WTC11 (cell line): ENCODE measurements at regions of chr2 and their contacts with region 1.

Region 1: DNA sequence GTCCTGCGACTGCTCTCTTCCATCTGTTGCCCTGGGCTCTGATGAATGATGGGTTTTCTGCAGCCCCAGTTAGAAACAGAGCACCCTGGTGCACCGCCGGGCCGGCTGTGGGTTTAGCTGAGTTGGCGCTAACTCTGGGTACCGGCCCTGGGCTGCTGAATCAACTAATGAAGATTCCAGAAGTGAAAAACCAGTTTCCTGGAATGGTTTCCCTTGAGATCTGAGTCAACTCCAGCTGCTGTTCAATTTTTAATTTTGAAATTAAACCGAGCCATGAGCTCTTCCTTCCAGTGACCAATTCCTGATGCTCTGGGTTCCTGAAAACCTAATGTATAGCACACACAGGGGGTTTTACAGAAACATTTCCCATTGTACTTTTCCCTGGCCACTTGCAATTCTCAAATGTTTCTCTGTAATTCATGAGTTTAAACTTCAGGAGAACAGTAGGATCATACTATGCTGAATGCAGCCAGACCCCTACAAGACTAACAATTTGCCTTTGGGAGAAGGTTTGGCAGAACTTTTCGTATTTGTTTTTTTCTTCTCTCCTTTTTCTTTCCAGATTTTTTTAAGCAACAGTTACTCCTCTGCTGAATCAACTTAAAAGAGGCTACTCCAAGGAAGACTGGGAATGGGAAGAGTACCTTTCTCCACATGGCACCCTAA is 5.5 kb downstream of the COL6A3 start:
- DNase-seq: no peak
- ATAC-seq: no peak
- H3K4me3 Mint-ChIP-seq: no peak overlapping the region
- H3K27ac Mint-ChIP-seq: no peak overlapping the region; the same call in 1 of the 2 replicates
- H3K4me1 Mint-ChIP-seq: peaks cover 27% of the 10 kb centered on the region
- H3K27me3 Mint-ChIP-seq: peaks cover 2% of the 10 kb centered on the region
- CTCF ChIP-seq: no peak

Region 2: DNA sequence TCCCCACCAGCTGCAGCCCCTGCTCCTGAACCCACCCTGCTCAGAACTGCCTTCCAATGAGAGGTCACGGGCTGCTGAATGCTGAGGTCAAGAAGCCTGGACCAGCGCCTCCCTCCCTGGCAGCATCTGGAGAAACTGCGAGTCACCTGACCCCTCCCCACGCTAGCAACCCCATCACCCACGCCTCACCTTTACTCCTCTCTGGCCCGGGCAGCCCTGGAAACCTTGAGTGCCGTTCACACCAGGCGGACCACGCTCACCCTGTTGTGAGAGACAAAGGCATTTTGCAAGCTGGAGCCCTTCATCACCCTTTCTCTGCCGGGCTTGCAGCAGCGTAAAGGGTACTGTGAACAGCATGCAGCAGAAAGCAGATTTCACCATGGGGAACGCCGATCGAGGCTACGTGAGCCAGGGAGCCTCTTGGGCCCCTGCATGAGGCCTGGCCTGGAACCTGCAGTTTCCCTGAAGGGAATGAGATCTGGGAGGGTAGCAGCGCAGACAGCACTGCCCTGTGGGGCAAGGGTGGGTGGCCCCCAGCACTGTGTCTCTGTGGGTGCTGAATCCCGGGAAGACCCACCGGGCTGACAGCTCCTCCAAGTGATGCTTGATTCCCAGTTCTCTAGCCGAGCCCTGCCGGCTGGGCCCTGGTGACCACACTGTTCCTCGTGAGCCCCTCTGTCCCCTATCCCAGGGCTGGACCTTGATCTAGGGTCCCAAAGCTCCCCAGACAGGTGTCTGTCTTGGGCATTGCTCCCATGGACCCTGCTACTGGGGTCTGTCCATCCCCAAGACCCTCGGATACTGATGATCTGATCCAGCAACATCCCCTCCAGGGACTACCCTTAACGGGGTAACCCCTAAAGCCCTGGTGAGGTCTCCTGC is 48.3 kb before region 1 on chr2:
- CTCF ChIA-PET with region 1: interaction called, 11 read pairs
- POLR2A ChIA-PET with region 1: no interaction called
- DNase-seq: no peak
- ATAC-seq: peak; percentile 13
- H3K4me3 Mint-ChIP-seq: peak overlapping the region; percentile 21; the same call in 1 of the 2 replicates
- H3K27ac Mint-ChIP-seq: peak overlapping the region; percentile 77
- H3K4me1 Mint-ChIP-seq: peaks cover 31% of the 10 kb centered on the region
- H3K27me3 Mint-ChIP-seq: no peaks in the 10 kb centered on the region
- CTCF ChIP-seq: no peak

Region 3: DNA sequence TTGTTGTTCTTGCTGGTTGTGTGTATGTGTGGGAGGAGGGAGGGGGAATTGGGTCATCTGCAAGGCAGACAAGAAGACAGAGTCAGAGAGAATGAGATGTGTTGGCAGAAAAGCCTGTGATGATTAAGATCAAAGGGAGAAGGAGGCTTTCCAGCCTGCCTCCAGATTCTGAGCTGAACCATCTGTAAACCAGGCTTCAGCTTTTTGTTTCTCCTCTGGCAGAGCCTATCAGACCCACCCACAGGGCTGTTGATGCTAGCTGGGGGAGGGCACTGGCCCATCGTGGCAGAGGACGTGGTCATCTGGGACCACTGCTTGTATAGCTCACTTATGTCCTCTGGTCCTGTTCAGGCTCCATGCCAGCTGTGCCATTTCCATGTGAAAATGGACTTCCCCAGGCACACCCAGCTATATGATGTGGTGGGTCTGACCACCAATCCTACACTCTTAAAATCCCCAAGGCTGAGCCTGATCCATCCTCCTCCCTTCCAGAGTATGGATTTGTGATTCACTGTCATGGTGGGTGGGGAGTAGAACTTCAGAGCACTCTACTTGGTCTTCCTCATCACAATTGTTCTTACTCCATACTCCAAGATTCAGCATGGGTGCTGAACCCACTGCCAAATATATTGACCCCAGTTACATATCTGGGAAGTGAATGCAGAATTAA is 33.3 kb after region 1 on chr2:
- CTCF ChIA-PET with region 1: no interaction called
- POLR2A ChIA-PET with region 1: interaction called, 11 read pairs
- DNase-seq: no peak
- ATAC-seq: no peak
- H3K4me3 Mint-ChIP-seq: no peak overlapping the region
- H3K27ac Mint-ChIP-seq: no peak overlapping the region
- H3K4me1 Mint-ChIP-seq: peaks cover 17% of the 10 kb centered on the region
- H3K27me3 Mint-ChIP-seq: peaks cover 6% of the 10 kb centered on the region
- CTCF ChIP-seq: no peak